ENCODE measurements at regions of chr17 and their contacts with region 1.

Region 1: GRCh38 chr17:3308603-3309002 is 10.4 kb upstream of the OR3A1 start:
- DNase-seq: no peak
- ATAC-seq: no peak
- H3K4me3 ChIP-seq: no peak overlapping the region
- H3K4me3 Mint-ChIP-seq: no peak overlapping the region
- H3K27ac ChIP-seq: no peak overlapping the region
- H3K27ac Mint-ChIP-seq: no peak overlapping the region
- H3K4me1 ChIP-seq: no peaks in the 10 kb centered on the region
- H3K4me1 Mint-ChIP-seq: no peaks in the 10 kb centered on the region
- H3K27me3 ChIP-seq: peaks cover 0 to 12% of the 10 kb centered on the region in 2 experiments
- H3K27me3 Mint-ChIP-seq: peaks cover 7 to 15% of the 10 kb centered on the region in 2 donors

Region 2: GRCh38 chr17:3260600-3260999 is 48.0 kb before region 1 on chr17:
- CTCF ChIA-PET with region 1: no interaction called
- POLR2A ChIA-PET with region 1: no interaction called
- DNase-seq: no peak
- ATAC-seq: no peak
- H3K4me3 ChIP-seq: no peak overlapping the region
- H3K4me3 Mint-ChIP-seq: no peak overlapping the region
- H3K27ac ChIP-seq: no peak overlapping the region
- H3K27ac Mint-ChIP-seq: no peak overlapping the region
- H3K4me1 ChIP-seq: no peaks in the 10 kb centered on the region
- H3K4me1 Mint-ChIP-seq: no peaks in the 10 kb centered on the region
- H3K27me3 ChIP-seq: peaks cover 0 to 10% of the 10 kb centered on the region in 2 experiments
- H3K27me3 Mint-ChIP-seq: peaks cover 6 to 17% of the 10 kb centered on the region in 2 donors

Region 3: GRCh38 chr17:3440451-3440850 is 131.8 kb after region 1 on chr17:
- CTCF ChIA-PET with region 1: no interaction called
- POLR2A ChIA-PET with region 1: interaction called in 1 of 2 experiments, 11 read pairs
- DNase-seq: no peak
- ATAC-seq: no peak
- H3K4me3 ChIP-seq: no peak overlapping the region
- H3K4me3 Mint-ChIP-seq: no peak overlapping the region
- H3K27ac ChIP-seq: no peak overlapping the region
- H3K27ac Mint-ChIP-seq: no peak overlapping the region
- H3K4me1 ChIP-seq: no peaks in the 10 kb centered on the region
- H3K4me1 Mint-ChIP-seq: no peaks in the 10 kb centered on the region
- H3K27me3 ChIP-seq: peaks cover 0 to 8% of the 10 kb centered on the region in 2 experiments
- H3K27me3 Mint-ChIP-seq: peaks cover 17 to 37% of the 10 kb centered on the region in 2 donors

Measured in T-cell (primary cell).